ENCODE measurements at regions of chr17 and their contacts with region 1.

Region 1: GRCh38 chr17:50853015-50853615 is 13.0 kb downstream of the TOB1 start:
- DNase-seq: no peak
- H3K4me3 ChIP-seq: no peak overlapping the region
- CTCF ChIP-seq: no peak

Region 2: DNA sequence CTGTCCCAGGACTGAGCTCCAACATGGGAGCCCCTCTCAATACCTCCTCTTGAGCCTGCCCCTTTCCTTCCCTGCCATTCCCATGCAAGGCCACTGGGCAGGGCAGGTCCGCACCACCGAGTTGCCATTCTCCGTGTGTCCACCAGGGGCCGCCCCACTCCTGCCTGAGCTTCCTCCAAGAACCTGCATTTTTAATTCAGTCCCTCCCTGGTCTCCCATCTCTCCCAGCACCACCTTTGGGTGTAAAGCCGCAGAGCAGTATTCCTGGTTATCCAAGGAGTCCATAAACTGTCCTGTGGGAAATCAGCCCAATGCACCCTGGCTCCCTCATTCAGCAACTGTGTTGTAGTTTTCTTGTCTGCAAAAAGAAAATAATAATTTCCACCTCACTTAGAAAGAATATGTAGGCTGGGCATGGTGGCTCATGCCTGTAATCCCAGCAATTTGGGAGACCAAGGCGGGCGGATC is 69.9 kb before region 1 on chr17:
- CTCF ChIA-PET with region 1: interaction called, 63 read pairs
- POLR2A ChIA-PET with region 1: no interaction called
- DNase-seq: no peak
- H3K4me3 ChIP-seq: no peak overlapping the region
- CTCF ChIP-seq: peak; percentile 99

Region 3: GRCh38 chr17:50834429-50835300 is 18.4 kb before region 1 on chr17:
- CTCF ChIA-PET with region 1: interaction called, 92 read pairs
- POLR2A ChIA-PET with region 1: no interaction called
- DNase-seq: no peak
- H3K4me3 ChIP-seq: no peak overlapping the region
- CTCF ChIP-seq: no peak

Region 4: GRCh38 chr17:50865984-50866774 is 13.1 kb after region 1 on chr17 and contains the start of gene TOB1:
- CTCF ChIA-PET with region 1: interaction called, 162 read pairs
- POLR2A ChIA-PET with region 1: interaction called, 67 read pairs
- DNase-seq: peak; percentile 72
- H3K4me3 ChIP-seq: peak within 1 kb of the TSS; percentile 92
- CTCF ChIP-seq: no peak

Region 5: GRCh38 chr17:50967795-50968194 is 114.7 kb after region 1 on chr17:
- CTCF ChIA-PET with region 1: interaction called, 109 read pairs
- POLR2A ChIA-PET with region 1: no interaction called
- DNase-seq: no peak
- H3K4me3 ChIP-seq: no peak overlapping the region
- CTCF ChIP-seq: no peak

Region 6: DNA sequence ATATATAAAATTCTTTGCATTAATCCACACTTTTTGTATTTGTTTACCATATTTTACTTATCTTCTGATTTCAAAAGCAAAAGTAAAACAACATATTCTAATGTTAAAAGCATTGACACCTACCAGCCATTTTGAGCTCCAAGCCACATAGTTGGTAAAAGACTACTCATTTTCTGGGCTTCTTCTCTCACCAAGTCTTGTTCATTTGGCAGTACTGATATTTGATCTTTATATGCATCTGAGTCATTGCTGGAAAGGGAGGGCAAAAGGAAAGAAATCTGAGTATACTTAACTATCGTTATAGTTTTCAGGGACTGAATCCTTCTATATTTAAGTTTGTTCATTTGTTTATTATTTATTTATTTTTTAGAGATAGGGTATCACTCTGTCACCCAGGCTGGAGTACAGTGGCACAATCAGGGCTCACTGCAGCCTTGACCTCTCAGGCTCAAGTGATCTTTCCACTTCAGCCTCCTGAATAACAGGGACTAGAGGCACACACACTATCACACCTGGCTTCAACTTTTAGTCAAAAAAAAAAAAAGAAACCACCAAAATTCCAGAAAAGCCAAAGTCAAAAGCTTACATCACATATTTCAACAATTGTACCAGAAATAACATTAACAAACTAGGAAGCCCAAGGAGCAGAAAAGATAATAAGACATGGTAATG is 134.0 kb after region 1 on chr17:
- CTCF ChIA-PET with region 1: interaction called, 21 read pairs
- POLR2A ChIA-PET with region 1: no interaction called
- DNase-seq: no peak
- H3K4me3 ChIP-seq: no peak overlapping the region
- CTCF ChIP-seq: no peak

Region 7: GRCh38 chr17:51056813-51057510 is 203.8 kb after region 1 on chr17:
- CTCF ChIA-PET with region 1: interaction called, 10 read pairs
- POLR2A ChIA-PET with region 1: no interaction called
- DNase-seq: peak; percentile 91
- H3K4me3 ChIP-seq: no peak overlapping the region
- CTCF ChIP-seq: peak; percentile 49

Measured in AG04449 (cell line).